ENCODE measurements at regions of chr2 and their contacts with region 1.

Region 1: GRCh38 chr2:99180755-99181623 is at the starts of genes MITD1 and MRPL30:
- DNase-seq: peak; percentile 93
- H3K4me3 ChIP-seq: peak within 1 kb of the TSS; percentile 65 to 78
- H3K27ac ChIP-seq: peak within 1 kb of the TSS; percentile 52 to 66
- H3K4me1 ChIP-seq: peaks cover 6% of the 10 kb centered on the region
- H3K27me3 ChIP-seq: no peaks in the 10 kb centered on the region
- CTCF ChIP-seq: peak in 3 of 4 experiments; percentile 1 to 28 (median 25)
- POLR2A ChIP-seq: peak; percentile 59
- total RNA-seq, gene MITD1: 16.0 to 28.7 TPM
- total RNA-seq, gene MRPL30: 24.1 to 37.3 TPM

Region 2: DNA sequence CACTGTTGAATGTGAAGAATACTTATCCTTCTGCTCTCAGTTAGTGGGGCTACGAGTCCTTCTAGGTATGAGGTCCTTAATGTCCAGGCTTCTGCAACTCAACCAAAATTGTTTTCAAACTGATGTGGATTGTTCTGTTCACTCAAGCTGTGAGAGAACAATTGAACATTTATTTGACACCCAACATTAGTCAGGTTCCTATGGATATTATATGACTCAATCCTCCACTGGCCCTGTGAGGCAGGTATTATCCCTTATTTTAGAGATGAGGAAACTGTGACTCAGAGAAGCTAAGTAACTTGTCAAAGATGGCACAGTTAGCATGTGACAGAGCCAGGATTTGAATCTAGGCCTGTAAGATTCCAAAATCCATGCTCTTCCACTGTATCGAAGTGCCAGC is 75.7 kb after region 1 on chr2:
- intact Hi-C with region 1: no loop called
- DNase-seq: no peak
- H3K4me3 ChIP-seq: no peak overlapping the region
- H3K27ac ChIP-seq: no peak overlapping the region
- H3K4me1 ChIP-seq: no peaks in the 10 kb centered on the region
- H3K27me3 ChIP-seq: no peaks in the 10 kb centered on the region
- CTCF ChIP-seq: no peak
- POLR2A ChIP-seq: no peak

Region 3: GRCh38 chr2:99337113-99338028 is 156.4 kb after region 1 on chr2 and contains the start of gene EIF5B:
- intact Hi-C with region 1: loop called (anchors 2 kb)
- DNase-seq: peak; percentile 96
- H3K4me3 ChIP-seq: peak within 1 kb of the TSS; percentile 45 to 90
- H3K27ac ChIP-seq: peak within 1 kb of the TSS; percentile 84 to 88
- H3K4me1 ChIP-seq: peaks cover 13% of the 10 kb centered on the region
- H3K27me3 ChIP-seq: no peaks in the 10 kb centered on the region
- CTCF ChIP-seq: peak; percentile 43 to 77 (median 76)
- POLR2A ChIP-seq: peak; percentile 64
- total RNA-seq, gene EIF5B: 24.0 to 40.5 TPM